ENCODE measurements at regions of chr10 and their contacts with region 1.

Region 1: GRCh38 chr10:3740157-3740871 is 44.7 kb downstream of the KLF6 start:
- DNase-seq: peak; percentile 57
- H3K4me3 Mint-ChIP-seq: peak overlapping the region; percentile 43
- H3K27ac Mint-ChIP-seq: peak overlapping the region; percentile 82
- H3K4me1 Mint-ChIP-seq: peaks cover 28% of the 10 kb centered on the region
- H3K27me3 Mint-ChIP-seq: no peaks in the 10 kb centered on the region

Region 2: DNA sequence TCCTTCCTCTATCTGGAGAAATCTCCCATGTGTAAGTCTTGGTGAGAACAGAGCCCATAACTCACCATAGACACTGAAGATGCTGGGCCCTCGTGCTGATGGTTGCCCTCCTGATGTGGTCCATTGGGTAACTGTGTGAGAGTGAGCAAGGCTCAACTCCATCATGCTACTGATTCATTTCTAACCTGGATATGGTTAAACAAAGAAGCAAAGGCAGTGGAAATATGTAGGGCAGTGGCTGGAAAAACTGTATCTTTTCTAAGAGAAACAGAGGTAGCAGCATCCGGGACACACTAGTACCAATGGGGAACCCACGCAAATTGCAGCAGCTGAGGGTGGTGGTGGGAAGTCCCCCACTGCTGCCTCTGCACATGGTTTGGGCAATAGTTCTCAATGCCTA is 177.0 kb before region 1 on chr10:
- CTCF ChIA-PET with region 1: no interaction called
- POLR2A ChIA-PET with region 1: no interaction called
- intact Hi-C with region 1: loop called (anchors 5 kb)
- DNase-seq: peak; percentile 82
- H3K4me3 Mint-ChIP-seq: no peak overlapping the region
- H3K27ac Mint-ChIP-seq: peak overlapping the region; percentile 35
- H3K4me1 Mint-ChIP-seq: peaks cover 27% of the 10 kb centered on the region
- H3K27me3 Mint-ChIP-seq: no peaks in the 10 kb centered on the region

Region 3: DNA sequence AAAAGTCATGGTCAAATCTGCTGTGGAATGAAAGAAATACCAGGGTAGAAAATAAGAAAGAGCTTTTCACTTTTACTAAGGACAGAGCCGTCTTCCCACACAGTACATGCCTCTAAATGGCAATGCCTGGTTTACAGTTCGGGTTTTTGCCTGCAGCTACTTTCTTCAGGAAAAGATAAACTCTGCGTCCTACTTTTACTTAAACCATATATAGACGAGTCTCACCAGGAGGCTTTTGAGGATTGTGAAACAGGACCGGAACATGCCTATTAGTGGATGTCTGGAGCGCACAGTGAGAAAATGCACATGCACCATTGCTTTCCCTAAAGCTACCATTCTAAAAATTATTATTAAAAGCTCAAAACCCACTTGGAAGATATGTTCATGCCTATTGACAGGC is 25.8 kb before region 1 on chr10:
- CTCF ChIA-PET with region 1: no interaction called
- POLR2A ChIA-PET with region 1: interaction called, 6 read pairs
- intact Hi-C with region 1: loop called (anchors 2 kb)
- DNase-seq: no peak
- H3K4me3 Mint-ChIP-seq: no peak overlapping the region
- H3K27ac Mint-ChIP-seq: no peak overlapping the region
- H3K4me1 Mint-ChIP-seq: peaks cover 22% of the 10 kb centered on the region
- H3K27me3 Mint-ChIP-seq: peaks cover 2% of the 10 kb centered on the region

Region 4: GRCh38 chr10:3805791-3806461 is 65.6 kb after region 1 on chr10:
- CTCF ChIA-PET with region 1: interaction called, 4 read pairs
- POLR2A ChIA-PET with region 1: interaction called, 9 read pairs
- intact Hi-C with region 1: loop called (anchors 1 kb)
- DNase-seq: peak; percentile 72
- H3K4me3 Mint-ChIP-seq: peak overlapping the region; percentile 68
- H3K27ac Mint-ChIP-seq: no peak overlapping the region
- H3K4me1 Mint-ChIP-seq: peaks cover 62% of the 10 kb centered on the region
- H3K27me3 Mint-ChIP-seq: no peaks in the 10 kb centered on the region

Region 5: DNA sequence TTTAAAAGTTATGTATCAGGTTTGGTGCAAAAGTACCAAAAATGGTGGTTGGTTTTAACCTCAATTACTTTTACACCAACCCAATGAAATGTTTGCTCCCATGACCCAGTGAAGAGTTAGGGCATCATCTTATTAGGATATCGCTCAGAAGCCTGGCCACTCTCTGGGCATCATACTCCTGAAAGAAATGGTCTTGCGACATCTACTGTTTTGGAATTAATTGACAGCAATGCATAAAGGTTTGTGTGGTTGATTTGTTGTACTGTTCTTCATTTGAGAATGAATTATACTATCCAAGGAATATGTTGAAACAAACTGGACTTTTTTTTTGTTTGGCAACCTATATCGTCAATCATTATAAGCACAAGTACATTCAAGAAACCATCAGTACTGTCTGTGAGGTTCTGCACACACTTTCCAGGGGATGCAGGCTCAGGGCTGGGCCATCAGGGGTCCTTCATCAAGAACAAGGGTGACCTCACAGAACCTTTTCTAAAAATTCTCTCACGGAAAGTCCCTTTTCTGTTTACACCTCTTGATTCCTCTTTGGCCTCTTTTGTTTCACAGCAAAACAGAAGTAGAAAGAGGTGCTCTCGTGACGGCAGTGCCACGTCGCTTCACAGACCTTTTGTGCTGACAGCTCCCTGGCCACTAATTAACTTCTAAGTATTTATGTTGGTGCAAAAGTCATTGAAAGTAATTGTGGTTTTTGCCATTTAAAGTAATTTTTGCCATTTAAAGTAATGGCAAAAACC is 161.9 kb after region 1 on chr10:
- CTCF ChIA-PET with region 1: no interaction called
- POLR2A ChIA-PET with region 1: no interaction called
- intact Hi-C with region 1: loop called (anchors 1 kb)
- DNase-seq: peak; percentile 69
- H3K4me3 Mint-ChIP-seq: no peak overlapping the region
- H3K27ac Mint-ChIP-seq: peak overlapping the region; percentile 79
- H3K4me1 Mint-ChIP-seq: peaks cover 45% of the 10 kb centered on the region
- H3K27me3 Mint-ChIP-seq: no peaks in the 10 kb centered on the region